Panc1 (cell line): ENCODE measurements at regions of chr7 and their contacts with region 1.

Region 1: GRCh38 chr7:7054252-7054830 is 128.0 kb upstream of the C1GALT1 start:
- DNase-seq: no peak
- ATAC-seq: no peak
- H3K4me3 ChIP-seq: no peak overlapping the region
- H3K27ac ChIP-seq: no peak overlapping the region
- H3K4me1 ChIP-seq: no peaks in the 10 kb centered on the region
- H3K27me3 ChIP-seq: peaks cover 18% of the 10 kb centered on the region
- CTCF ChIP-seq: no peak

Region 2: GRCh38 chr7:6831018-6831725 is 223.2 kb before region 1 on chr7:
- CTCF ChIA-PET with region 1: no interaction called
- POLR2A ChIA-PET with region 1: no interaction called
- in situ Hi-C with region 1: no loop called
- intact Hi-C with region 1: no loop called
- DNase-seq: no peak
- ATAC-seq: no peak
- H3K4me3 ChIP-seq: no peak overlapping the region
- H3K27ac ChIP-seq: no peak overlapping the region
- H3K4me1 ChIP-seq: no peaks in the 10 kb centered on the region
- H3K27me3 ChIP-seq: peaks cover 15% of the 10 kb centered on the region
- CTCF ChIP-seq: no peak

Region 3: GRCh38 chr7:7077945-7078344 is 23.6 kb after region 1 on chr7:
- CTCF ChIA-PET with region 1: no interaction called
- POLR2A ChIA-PET with region 1: no interaction called
- in situ Hi-C with region 1: no loop called
- intact Hi-C with region 1: loop called (anchors 1 kb)
- DNase-seq: no peak
- ATAC-seq: no peak
- H3K4me3 ChIP-seq: no peak overlapping the region
- H3K27ac ChIP-seq: no peak overlapping the region
- H3K4me1 ChIP-seq: no peaks in the 10 kb centered on the region
- H3K27me3 ChIP-seq: peaks cover 13% of the 10 kb centered on the region; the same call in 1 of the 2 replicates
- CTCF ChIP-seq: no peak